Mammary epithelial cell (primary cell): ENCODE measurements at regions of chr9 and their contacts with region 1.

Region 1: DNA sequence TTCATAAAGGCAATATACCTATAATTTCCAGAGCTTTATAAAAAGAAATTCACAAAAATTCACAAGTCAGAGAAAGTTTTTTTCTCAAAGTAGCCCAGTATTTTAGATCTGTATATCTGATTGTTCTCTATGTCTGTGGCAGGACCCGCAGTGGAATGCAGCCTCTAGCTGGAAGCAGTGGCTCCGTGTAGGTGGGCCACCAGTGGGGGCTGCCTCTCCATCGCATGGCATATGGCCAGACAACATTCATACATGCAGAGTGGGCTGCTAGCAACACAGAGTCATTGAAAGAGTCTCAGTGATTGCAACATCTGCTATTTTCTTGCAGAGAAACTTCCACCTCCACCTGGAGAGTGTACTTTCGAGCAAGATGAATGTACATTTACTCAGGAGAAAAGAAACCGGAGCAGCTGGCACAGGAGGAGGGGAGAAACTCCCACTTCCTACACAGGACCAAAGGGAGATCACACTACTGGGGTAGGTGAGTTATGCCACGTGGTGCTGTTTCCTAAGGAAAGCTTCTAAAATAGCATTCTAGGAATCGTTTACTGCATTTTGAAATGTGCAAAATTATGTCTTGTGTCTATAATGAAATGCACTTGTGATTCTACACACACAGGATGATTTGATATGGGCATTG is 88.5 kb upstream of the SMC5 start:
- DNase-seq: no peak
- H3K4me3 ChIP-seq: no peak overlapping the region
- H3K27ac ChIP-seq: no peak overlapping the region
- H3K4me1 ChIP-seq: no peaks in the 10 kb centered on the region
- H3K27me3 ChIP-seq: no peaks in the 10 kb centered on the region
- CTCF ChIP-seq: no peak

Region 2: DNA sequence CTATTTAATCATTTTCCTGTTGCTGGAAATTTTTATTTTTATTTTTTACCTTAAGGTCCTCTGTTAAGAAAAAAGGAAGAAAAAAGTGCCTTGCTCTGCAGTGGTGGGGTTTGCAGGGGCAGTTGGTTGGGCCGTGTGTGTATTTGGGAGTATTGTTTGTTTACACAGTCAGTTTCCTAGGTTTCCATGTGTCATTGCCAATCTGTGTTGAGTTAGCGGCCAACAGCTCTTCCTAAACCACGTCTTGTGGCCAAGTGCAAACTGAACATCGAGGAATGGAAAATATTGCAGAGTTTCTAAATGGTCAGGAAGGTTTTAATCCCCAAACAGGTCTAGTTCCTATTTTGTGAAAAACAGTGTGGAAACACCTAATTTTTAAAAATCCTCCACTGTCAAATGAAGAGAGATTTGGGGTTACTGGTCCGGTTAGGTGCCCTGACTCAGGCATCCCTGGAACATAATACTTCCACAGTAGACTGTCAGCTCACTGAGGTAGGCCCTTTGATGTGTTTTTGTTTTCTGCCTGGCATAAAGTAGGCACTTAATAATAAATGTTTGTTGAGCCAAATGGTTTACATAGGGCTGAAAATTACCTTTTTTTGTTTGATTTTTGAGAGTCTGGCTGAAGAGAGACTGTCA is 89.7 kb before region 1 on chr9:
- CTCF ChIA-PET with region 1: no interaction called
- dilution Hi-C with region 1: loop called (anchors 5 kb)
- in situ Hi-C with region 1: no loop called
- intact Hi-C with region 1: no loop called
- DNase-seq: peak; percentile 35
- H3K4me3 ChIP-seq: no peak overlapping the region
- H3K27ac ChIP-seq: peak overlapping the region; percentile 17
- H3K4me1 ChIP-seq: peaks cover 28% of the 10 kb centered on the region
- H3K27me3 ChIP-seq: no peaks in the 10 kb centered on the region
- CTCF ChIP-seq: no peak

Region 3: GRCh38 chr9:70120834-70121510 is 49.3 kb before region 1 on chr9:
- CTCF ChIA-PET with region 1: no interaction called
- dilution Hi-C with region 1: no loop called
- in situ Hi-C with region 1: no loop called
- intact Hi-C with region 1: no loop called
- DNase-seq: peak; percentile 98
- H3K4me3 ChIP-seq: no peak overlapping the region
- H3K27ac ChIP-seq: peak overlapping the region; percentile 72
- H3K4me1 ChIP-seq: peaks cover 66% of the 10 kb centered on the region
- H3K27me3 ChIP-seq: no peaks in the 10 kb centered on the region
- CTCF ChIP-seq: peak in 1 of 2 donors; percentile 46

Region 4: GRCh38 chr9:70303268-70303667 is 133.0 kb after region 1 on chr9:
- CTCF ChIA-PET with region 1: no interaction called
- dilution Hi-C with region 1: no loop called
- in situ Hi-C with region 1: no loop called
- intact Hi-C with region 1: no loop called
- DNase-seq: peak; percentile 29
- H3K4me3 ChIP-seq: no peak overlapping the region
- H3K27ac ChIP-seq: no peak overlapping the region
- H3K4me1 ChIP-seq: no peaks in the 10 kb centered on the region
- H3K27me3 ChIP-seq: no peaks in the 10 kb centered on the region
- CTCF ChIP-seq: no peak